ENCODE measurements at regions of chr6 and their contacts with region 1.

Region 1: DNA sequence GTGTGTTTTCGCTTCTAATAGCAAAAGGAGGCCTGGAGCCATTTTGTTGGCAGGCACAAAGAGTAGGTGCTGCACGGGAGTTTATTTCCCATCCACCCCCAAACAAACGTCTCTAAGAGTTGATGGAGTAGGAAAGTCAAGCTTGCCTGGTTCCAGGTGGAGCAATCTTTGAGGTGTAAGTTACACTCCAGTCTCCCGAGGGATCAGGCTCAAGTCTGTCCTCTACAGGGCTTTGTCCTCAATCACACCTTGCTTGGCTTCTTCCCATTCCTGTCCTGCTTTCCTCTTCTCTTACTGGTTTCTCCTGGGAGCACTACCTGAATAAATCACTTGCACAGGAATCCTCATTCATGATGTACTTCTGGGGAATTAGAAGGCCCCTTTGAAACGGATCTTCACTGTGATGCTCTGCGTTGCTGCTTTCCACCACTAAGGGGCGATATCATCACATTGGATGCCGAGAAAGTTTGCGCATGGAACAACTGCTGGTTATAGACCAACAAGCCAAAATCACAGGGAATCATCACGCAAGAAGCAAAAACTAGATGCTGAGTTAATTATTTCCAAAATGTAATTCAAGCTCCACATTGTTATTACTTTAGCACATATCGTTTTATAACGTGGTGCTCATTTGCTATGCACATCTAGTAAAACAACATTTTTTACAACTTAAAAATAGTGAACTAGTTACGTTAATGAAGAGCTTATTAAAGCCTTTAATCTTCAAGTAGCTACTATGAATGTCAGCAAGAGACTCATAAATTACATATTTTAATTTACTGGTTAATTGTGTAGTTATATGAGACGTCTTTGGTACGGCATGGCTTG is 156.8 kb downstream of the DNAH8 start:
- DNase-seq: peak; percentile 77
- H3K4me3 Mint-ChIP-seq: no peak overlapping the region
- H3K27ac Mint-ChIP-seq: no peak overlapping the region
- H3K4me1 Mint-ChIP-seq: peaks cover 22% of the 10 kb centered on the region
- H3K27me3 Mint-ChIP-seq: peaks cover 2% of the 10 kb centered on the region

Region 2: DNA sequence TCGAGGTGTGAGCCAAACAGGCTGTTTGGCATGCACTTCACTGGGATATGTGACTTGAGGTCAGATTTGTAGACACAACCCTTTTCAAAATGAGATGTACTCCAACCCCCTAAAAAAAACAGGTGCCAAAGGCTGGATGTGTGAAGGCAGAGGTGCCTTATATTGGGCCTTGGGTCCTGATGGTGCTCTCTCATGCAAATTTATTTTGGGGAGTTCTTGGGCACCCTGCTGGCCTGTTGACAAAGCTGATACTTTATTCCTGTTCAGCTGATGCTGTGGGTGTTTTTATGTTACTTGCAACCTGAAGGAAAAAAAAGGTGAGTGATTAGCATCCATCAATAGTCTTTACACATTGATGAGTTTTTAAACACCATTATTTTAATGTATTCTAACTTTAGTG is 35.4 kb before region 1 on chr6:
- CTCF ChIA-PET with region 1: no interaction called
- POLR2A ChIA-PET with region 1: no interaction called
- intact Hi-C with region 1: no loop called
- DNase-seq: no peak
- H3K4me3 Mint-ChIP-seq: no peak overlapping the region
- H3K27ac Mint-ChIP-seq: no peak overlapping the region
- H3K4me1 Mint-ChIP-seq: no peaks in the 10 kb centered on the region
- H3K27me3 Mint-ChIP-seq: peaks cover 2% of the 10 kb centered on the region

Region 3: DNA sequence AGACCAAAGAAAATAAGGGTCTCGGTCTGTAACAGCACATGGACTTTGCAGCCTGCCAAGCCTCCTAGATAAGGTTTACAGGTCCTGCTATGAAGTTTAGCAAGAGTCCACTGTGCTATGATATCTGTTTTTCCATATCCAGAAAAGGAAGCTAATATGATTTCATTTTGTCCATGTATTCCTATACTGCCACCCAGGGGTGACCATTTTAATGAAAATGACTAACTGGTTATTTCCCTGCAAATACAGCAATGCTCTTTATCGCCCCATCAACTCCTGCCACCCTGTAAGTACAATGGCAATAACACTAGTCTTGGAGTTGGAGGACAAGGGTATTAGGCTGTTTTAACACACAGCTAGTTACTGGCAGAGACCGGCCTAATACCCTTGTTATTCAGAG is 61.5 kb after region 1 on chr6:
- CTCF ChIA-PET with region 1: interaction called, 15 read pairs
- POLR2A ChIA-PET with region 1: no interaction called
- intact Hi-C with region 1: loop called (anchors 1 kb)
- DNase-seq: no peak
- H3K4me3 Mint-ChIP-seq: no peak overlapping the region
- H3K27ac Mint-ChIP-seq: no peak overlapping the region
- H3K4me1 Mint-ChIP-seq: no peaks in the 10 kb centered on the region
- H3K27me3 Mint-ChIP-seq: no peaks in the 10 kb centered on the region

Region 4: DNA sequence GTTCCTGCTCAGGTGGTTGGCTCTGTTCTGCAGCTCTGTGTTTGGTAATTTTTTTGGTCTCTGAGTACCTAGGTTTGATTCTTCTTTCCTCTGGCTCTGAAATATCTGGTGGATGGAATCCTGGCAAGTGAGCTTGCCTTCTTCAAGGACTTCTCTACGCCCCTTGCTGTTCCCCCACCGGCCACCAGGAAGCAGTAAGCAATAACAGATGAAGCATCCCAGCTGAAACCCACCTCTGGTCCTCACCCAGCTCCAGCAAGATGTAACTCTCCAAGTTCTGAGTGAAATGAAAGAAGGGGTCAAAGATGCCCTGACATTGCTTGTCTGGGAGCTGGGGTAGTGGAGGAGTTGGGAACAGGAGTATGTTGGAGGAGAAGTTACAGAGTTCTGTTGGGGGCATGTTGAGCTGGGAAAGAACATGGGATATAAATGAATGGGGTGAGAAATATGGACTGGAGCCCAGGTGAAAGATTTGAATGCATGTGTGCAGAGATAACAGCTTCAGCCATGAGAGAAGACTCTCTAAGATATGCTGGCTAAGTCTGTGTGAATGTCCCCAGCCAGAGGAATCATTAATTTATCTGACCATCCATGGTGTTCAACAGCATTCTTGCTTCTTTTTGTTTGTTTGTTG is 125.3 kb after region 1 on chr6:
- CTCF ChIA-PET with region 1: interaction called, 19 read pairs
- POLR2A ChIA-PET with region 1: no interaction called
- intact Hi-C with region 1: no loop called
- DNase-seq: peak; percentile 47
- H3K4me3 Mint-ChIP-seq: no peak overlapping the region
- H3K27ac Mint-ChIP-seq: no peak overlapping the region
- H3K4me1 Mint-ChIP-seq: no peaks in the 10 kb centered on the region
- H3K27me3 Mint-ChIP-seq: peaks cover 29% of the 10 kb centered on the region

Region 5: DNA sequence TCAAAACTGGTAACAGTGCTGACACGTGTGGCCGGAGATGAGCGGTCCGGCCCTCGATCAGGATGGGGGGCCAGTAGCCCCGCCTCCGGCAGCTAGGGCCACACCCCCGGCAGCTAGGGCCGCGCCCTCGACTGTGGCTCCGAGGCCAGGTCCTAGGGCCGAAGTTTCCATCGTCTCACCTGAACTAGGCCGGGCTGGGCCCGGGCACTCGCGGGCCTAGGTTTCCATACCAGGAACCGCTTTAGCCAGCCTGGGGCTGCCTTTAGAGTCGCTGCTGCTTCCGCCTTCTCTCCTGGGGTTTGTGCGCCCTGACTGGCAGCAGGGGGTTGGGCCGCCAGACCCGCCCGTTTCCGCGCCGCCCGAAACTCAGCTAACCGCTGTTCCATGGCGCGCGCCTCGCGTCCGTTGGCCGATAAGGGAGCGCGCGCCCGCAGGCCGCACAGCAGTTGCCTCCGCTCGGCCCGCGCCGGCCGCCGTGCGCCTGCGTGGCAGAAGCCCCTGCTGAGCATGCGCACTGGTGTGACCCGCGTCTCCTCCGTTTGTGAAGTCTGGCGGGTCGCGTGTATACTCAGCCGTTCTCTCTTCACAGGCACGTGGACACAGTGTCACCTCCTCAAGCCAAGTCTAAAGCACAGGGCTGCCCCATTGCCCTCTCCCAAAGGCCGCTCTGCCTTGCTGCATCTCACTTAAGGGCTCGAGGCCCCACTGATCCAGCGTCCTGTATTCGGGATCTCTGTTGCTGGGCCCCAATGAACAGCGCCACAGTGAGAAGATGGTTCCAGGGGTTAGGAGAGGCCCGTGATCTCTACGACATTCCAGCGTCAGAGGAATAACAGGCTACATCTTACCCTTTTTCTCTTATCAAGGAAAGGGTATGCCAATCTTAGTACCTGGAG is 243.0 kb after region 1 on chr6 and contains the start of gene SAYSD1:
- CTCF ChIA-PET with region 1: interaction called, 5 read pairs
- POLR2A ChIA-PET with region 1: no interaction called
- intact Hi-C with region 1: loop called (anchors 10 kb)
- DNase-seq: peak; percentile 95
- H3K4me3 Mint-ChIP-seq: peak within 1 kb of the TSS; percentile 95
- H3K27ac Mint-ChIP-seq: peak within 1 kb of the TSS; percentile 96
- H3K4me1 Mint-ChIP-seq: peaks cover 56% of the 10 kb centered on the region
- H3K27me3 Mint-ChIP-seq: no peaks in the 10 kb centered on the region
- total RNA-seq, gene SAYSD1: 12.3 to 12.9 TPM

Region 6: DNA sequence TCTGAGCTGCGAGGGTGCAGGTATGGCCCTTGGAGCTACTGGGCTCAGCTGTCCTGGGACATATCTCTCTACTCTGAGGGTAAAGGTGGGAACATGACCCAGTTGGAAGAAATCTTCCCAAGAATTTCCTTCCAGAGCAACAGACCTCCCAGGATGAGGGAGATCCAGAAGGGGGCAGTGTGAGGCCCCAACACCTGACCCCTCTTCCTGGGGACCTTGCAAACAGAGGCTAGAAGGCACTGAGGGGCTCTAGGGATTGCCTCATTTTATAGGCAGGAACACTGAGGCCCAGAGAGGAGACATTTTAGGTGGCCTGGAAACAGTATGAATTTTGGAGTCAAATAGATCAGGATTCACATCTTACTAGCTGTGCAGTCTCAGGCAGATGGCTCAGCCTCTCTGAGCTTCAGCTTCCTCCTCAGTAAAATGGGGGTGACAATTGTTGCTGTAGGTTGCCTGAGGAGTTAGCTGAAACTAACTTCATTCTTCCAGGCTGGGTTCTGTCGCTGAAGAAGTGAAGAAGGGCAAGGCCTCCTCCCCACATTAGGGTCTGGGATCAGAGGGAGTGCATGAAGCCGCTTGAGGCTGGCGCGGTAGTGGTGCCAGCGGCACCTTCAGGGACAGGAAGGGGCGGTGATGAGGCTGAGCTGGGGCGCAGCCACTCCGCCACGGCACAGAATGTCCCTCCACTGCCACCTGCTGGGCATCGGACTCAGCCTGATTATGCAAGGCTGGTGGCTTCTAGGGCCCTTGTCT is 430.9 kb after region 1 on chr6:
- CTCF ChIA-PET with region 1: interaction called, 54 read pairs
- POLR2A ChIA-PET with region 1: no interaction called
- intact Hi-C with region 1: loop called (anchors 1 kb)
- DNase-seq: peak; percentile 92
- H3K4me3 Mint-ChIP-seq: peak overlapping the region; percentile 59
- H3K27ac Mint-ChIP-seq: no peak overlapping the region
- H3K4me1 Mint-ChIP-seq: peaks cover 3% of the 10 kb centered on the region
- H3K27me3 Mint-ChIP-seq: no peaks in the 10 kb centered on the region